Ascending aorta (tissue), 2 donors: ENCODE measurements at regions of chr12 and their contacts with region 1.

Region 1: GRCh38 chr12:50314629-50315312 is 31.5 kb upstream of the LIMA1 start:
- DNase-seq: no peak
- H3K4me3 ChIP-seq: no peak overlapping the region
- H3K27ac ChIP-seq: no peak overlapping the region
- H3K4me1 ChIP-seq: no peaks in the 10 kb centered on the region
- H3K27me3 ChIP-seq: no peaks in the 10 kb centered on the region
- CTCF ChIP-seq: peak; percentile 27 to 65 (median 47)

Region 2: DNA sequence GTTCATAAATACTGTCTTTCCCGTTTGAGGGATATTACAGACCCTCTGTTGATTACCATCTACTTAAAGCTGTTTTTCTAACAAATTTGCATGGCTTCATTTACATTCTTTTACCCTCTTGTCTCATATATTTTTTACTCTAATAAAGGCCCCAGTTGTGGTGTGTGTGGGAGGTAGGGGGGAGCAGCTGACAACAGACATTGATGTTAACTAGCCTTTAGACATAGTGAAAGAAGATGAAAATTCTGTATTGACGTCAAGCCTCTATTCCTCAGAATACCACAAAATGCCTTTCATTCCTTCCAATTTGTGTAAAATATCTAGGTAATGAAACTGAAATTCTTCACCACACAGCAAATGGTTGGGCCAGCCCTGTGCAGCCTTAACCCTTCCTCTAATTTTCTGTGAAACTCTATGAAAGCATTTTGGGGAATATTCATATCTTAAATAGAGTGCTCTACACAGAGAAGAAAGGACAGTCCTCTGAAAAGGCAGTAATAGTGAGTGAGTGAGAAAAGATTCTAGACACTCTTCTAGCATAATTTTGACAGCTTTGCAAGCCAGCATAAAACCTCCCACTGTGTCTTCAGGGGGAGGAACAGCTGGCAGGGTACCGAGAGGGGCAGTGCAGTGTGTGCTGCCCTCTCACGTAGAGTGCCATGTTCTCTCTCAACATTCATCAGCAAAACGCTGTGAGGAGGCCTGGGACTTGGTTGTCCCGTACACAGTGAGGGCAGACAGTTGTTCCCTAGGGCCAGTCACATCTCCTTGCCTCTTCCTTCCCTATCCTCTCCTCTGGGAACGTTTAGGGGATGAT is 127.5 kb before region 1 on chr12:
- intact Hi-C with region 1: loop called (anchors 10 kb)
- DNase-seq: no peak
- H3K4me3 ChIP-seq: no peak overlapping the region
- H3K27ac ChIP-seq: peak overlapping the region; percentile 82 to 89
- H3K4me1 ChIP-seq: peaks cover 22 to 59% of the 10 kb centered on the region in 2 donors
- H3K27me3 ChIP-seq: no peaks in the 10 kb centered on the region
- CTCF ChIP-seq: no peak